Calu3 (cell line): ENCODE measurements at regions of chr1 and their contacts with region 1.

Region 1: DNA sequence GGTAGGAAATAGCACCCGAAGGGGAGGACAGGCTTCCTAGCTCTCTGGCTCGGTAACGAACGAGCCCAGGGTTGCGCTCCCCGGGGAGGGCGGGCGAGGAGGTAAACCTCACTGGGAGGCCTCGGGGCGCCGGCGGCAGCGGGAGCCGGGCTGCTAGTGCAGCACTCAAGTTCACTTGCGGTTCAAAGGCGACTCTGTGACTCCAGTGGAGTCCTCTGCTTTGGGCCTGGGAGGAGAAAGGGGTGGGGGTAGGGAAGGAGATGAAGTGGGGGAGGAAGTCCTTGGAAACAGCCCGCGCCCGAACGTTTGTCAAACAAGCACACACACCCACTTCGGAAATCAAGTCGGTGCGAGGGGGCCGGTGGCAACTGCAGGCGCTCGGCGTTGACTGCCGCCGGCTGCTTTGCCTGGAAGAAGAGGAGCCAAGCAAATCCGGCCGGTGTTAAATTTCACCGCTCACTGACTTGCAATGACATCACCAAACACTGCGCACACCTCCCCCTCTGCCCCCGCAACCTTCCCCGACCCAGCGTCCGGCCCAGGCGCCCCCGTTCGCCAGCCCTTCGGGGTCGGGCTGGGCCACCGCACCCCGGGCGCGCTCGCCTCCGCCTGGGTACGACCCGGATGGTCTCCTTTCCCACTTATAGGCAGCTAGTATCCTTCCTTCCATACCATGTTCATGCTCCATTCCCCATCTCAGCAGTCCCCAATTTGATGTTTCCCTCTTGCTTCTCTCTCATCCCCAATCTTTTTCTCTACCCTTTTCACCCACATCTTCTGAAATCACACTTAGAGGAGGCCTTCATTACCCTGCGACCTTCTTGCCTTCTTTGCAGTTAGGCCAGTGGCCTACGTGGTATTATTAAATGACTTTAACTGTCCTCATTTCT is at the start of gene COL24A1:
- DNase-seq: peak; percentile 32
- H3K4me3 Mint-ChIP-seq: peak within 1 kb of the TSS; percentile 26
- H3K27ac Mint-ChIP-seq: no peak within 1 kb of the TSS
- H3K4me1 Mint-ChIP-seq: peaks cover 7% of the 10 kb centered on the region
- H3K27me3 Mint-ChIP-seq: peaks cover 70% of the 10 kb centered on the region
- CTCF ChIP-seq: no peak
- total RNA-seq, gene COL24A1: not detected in 2 replicates

Region 2: GRCh38 chr1:85734931-85735330 is 421.9 kb before region 1 on chr1:
- CTCF ChIA-PET with region 1: no interaction called
- intact Hi-C with region 1: loop called (anchors 10 kb)
- DNase-seq: peak; percentile 5
- H3K4me3 Mint-ChIP-seq: no peak overlapping the region
- H3K27ac Mint-ChIP-seq: no peak overlapping the region
- H3K4me1 Mint-ChIP-seq: peaks cover 8% of the 10 kb centered on the region
- H3K27me3 Mint-ChIP-seq: no peaks in the 10 kb centered on the region
- CTCF ChIP-seq: no peak

Region 3: GRCh38 chr1:86110451-86111129 is 46.2 kb before region 1 on chr1:
- CTCF ChIA-PET with region 1: interaction called, 10 read pairs
- intact Hi-C with region 1: no loop called
- DNase-seq: no peak
- H3K4me3 Mint-ChIP-seq: no peak overlapping the region
- H3K27ac Mint-ChIP-seq: no peak overlapping the region
- H3K4me1 Mint-ChIP-seq: no peaks in the 10 kb centered on the region
- H3K27me3 Mint-ChIP-seq: no peaks in the 10 kb centered on the region
- CTCF ChIP-seq: no peak